ENCODE measurements at regions of chr20 and their contacts with region 1.

Region 1: GRCh38 chr20:3051385-3052019 is 5.7 kb downstream of the MRPS26 start:
- DNase-seq: no peak
- CTCF ChIP-seq: no peak

Region 2: GRCh38 chr20:3088031-3088430 is 36.5 kb after region 1 on chr20:
- CTCF ChIA-PET with region 1: interaction called, 10 read pairs
- POLR2A ChIA-PET with region 1: no interaction called
- DNase-seq: no peak
- CTCF ChIP-seq: no peak

Region 3: DNA sequence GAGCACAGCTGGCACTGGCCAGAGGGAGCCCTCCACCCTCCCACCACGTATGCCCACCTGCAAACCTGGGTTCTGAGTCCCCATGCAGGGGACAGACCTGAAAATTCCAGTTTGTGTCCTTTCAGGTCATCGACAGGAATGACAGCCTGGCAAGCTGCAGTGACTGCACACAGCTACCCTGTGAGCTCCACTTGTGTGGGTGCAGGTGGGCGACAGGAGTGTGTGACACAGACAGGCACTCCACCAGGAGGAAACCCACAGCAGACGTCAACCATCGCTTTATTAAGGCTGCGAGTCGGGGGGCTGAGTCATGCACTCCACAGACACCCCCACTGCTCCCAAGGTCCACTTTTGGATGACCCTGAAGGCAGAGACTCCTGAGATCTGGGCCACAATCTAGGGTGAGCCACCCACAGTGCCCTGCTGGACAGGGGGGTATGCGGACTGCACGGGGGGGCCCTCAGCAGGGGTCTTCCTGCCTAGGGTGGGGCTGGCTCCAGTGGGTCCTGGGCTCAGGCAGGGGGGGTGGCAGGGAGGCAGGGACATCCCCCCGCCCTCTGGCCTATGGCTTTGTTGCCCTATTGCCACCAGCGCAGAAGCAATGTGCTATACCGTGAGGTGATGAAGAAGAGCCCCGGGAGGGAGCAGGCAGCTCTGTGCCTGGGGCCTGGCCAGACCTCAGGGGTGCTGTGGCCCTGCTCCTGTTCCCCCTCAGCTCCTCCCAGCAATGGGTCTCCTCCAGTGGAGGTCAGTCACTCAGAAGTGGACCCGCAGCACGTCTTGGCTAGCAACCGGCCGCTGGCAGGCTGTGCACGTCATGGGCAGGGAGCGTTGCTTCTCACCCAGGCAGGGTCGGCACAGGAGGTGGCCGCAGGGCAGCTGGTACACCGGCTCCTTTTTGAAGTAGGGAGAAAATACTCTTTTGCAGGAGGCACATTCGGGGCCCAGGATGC is 58.1 kb after region 1 on chr20:
- CTCF ChIA-PET with region 1: interaction called, 23 read pairs
- POLR2A ChIA-PET with region 1: no interaction called
- DNase-seq: no peak
- CTCF ChIP-seq: no peak

Region 4: DNA sequence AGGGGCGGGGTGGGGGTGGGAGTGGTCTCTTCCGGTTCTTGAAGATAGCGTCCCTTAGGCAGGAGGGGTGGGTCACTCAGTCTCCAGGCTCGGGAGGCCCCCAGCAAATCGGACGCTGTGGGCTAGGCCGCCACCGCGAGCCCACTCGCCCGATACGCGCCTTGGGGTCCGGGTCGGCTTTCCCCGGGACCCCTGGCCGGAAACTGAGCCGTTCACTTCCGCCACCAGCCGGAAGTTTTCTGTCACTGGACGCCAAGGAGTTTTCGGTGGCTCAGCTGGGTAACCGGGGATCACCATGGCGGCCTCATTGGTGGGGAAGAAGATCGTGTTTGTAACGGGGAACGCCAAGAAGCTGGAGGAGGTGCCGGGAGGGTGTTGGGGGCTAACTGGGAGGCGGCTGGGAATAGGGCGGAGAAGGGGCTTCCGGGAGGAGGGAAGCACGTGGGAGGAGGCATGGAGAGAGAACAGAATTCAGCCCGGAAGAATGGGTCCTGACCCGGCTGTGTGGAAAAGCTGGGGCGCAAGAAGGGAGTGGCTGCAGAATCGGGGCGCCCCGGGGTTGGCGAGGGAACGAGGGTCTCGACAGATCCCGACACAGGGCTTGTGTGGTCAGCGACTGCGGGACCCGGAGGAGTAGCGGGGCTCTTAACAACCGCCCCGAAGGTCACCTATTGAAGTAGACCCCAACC is 157.9 kb after region 1 on chr20 and contains the start of gene ITPA:
- CTCF ChIA-PET with region 1: interaction called, 11 read pairs
- POLR2A ChIA-PET with region 1: no interaction called
- DNase-seq: peak; percentile 86
- CTCF ChIP-seq: no peak

Region 5: DNA sequence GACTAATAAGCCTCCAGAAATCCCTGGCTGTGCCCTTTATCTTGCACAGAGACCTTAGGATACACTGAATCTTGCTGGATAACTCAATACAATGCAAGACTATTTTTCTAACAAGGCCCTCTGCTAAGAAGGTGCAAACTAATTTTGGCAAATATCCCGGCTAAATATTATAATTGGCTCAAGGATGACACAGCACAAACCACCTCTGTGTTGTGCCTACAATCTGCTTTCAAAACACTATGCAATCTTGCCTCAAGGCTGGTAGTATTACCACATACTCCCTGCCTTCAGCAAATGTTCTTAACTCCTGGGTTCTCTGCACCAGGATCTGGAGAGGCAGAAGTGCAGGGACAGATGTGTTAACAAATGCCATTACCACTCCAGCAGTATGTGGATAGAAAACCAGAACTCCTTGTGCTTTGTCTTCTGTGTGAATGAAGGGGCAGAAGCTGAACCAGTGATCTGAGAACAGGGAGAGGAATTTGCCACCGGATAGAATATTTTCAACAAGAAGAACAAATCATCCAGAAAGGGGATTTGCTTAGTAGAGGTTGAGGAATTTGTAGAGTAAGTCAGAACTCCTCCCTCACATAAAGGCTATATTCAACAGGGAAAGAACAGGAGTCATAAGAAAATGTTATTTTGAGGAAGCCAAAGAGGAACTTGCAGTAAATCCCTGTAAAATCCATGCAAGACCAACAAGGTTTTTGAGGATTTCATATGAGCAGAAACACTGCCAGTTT is 261.6 kb after region 1 on chr20:
- CTCF ChIA-PET with region 1: interaction called, 14 read pairs
- POLR2A ChIA-PET with region 1: interaction called, 3 read pairs
- DNase-seq: no peak
- CTCF ChIP-seq: no peak